Ovary (tissue), 10 donors: ENCODE measurements at regions of chr21 and their contacts with region 1.

Region 1: GRCh38 chr21:45478115-45478801 is 64.0 kb downstream of the SLC19A1 start:
- DNase-seq: peak in 3 of 5 donors; percentile 74 to 80 (median 75)
- H3K4me3 ChIP-seq: no peak overlapping the region
- H3K27ac ChIP-seq: peak overlapping the region in 1 of 2 donors; percentile 56
- H3K4me1 ChIP-seq: peaks cover 2% of the 10 kb centered on the region
- H3K27me3 ChIP-seq: no peaks in the 10 kb centered on the region
- CTCF ChIP-seq: peak; percentile 29 to 73 (median 63)
- EP300 ChIP-seq: no peak
- POLR2A ChIP-seq: no peak

Region 2: GRCh38 chr21:44984631-44985440 is 493.4 kb before region 1 on chr21:
- intact Hi-C with region 1: no loop called
- DNase-seq: peak in 3 of 5 donors; percentile 15 to 40 (median 21)
- H3K4me3 ChIP-seq: no peak overlapping the region
- H3K27ac ChIP-seq: no peak overlapping the region
- H3K4me1 ChIP-seq: peaks cover 12% of the 10 kb centered on the region
- H3K27me3 ChIP-seq: no peaks in the 10 kb centered on the region
- CTCF ChIP-seq: no peak
- EP300 ChIP-seq: no peak
- POLR2A ChIP-seq: no peak

Region 3: DNA sequence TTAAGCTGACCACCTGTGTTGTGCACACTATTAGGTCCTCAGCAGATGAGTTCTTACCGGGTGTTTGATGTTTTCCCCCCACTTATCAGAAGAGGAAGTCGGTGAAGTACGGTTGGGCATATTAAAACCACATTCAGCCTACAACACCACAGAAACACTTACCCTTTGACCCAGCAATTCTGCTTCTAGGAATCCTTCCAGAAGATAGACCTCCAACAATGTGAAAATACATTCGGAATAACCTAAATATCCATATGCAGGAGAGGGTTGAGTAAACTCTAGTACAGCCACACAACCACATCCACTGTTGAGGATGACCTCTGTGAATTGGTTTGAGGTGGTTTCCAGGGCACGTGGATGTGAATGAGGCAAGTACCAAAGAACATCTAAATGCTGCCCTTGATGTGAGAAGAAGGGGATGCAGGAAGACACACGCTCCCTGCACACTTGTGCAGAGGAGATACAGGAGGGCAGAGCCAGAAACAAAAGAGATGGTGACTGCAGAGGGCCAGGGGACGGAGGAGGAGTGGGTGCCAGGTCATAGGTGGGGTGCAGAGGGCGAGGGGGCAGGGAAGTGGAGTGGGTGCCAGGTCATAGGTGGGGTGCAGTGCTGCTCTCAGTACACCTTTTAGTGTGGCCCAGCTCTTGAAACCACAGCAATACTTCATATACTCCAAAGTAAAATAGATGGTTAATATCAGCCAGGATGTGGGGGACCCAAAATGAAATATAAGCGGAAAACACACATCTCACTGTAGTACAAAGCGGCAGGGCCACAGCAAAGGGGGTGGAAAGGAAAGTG is 391.0 kb before region 1 on chr21:
- intact Hi-C with region 1: no loop called
- DNase-seq: no peak
- H3K4me3 ChIP-seq: no peak overlapping the region
- H3K27ac ChIP-seq: no peak overlapping the region
- H3K4me1 ChIP-seq: no peaks in the 10 kb centered on the region
- H3K27me3 ChIP-seq: no peaks in the 10 kb centered on the region
- CTCF ChIP-seq: no peak
- EP300 ChIP-seq: no peak
- POLR2A ChIP-seq: no peak

Region 4: GRCh38 chr21:45386721-45387371 is 91.4 kb before region 1 on chr21:
- intact Hi-C with region 1: no loop called
- DNase-seq: peak; percentile 83 to 92 (median 88)
- H3K4me3 ChIP-seq: no peak overlapping the region
- H3K27ac ChIP-seq: peak overlapping the region; percentile 75 to 79
- H3K4me1 ChIP-seq: peaks cover 24% of the 10 kb centered on the region
- H3K27me3 ChIP-seq: no peaks in the 10 kb centered on the region
- CTCF ChIP-seq: peak; percentile 14 to 68 (median 61)
- EP300 ChIP-seq: peak; percentile 75
- POLR2A ChIP-seq: no peak

Region 5: GRCh38 chr21:45427331-45428271 is 50.7 kb before region 1 on chr21:
- intact Hi-C with region 1: no loop called
- DNase-seq: peak; percentile 77 to 90 (median 87)
- H3K4me3 ChIP-seq: no peak overlapping the region
- H3K27ac ChIP-seq: peak overlapping the region; percentile 37 to 44
- H3K4me1 ChIP-seq: peaks cover 30% of the 10 kb centered on the region
- H3K27me3 ChIP-seq: no peaks in the 10 kb centered on the region
- CTCF ChIP-seq: no peak
- EP300 ChIP-seq: no peak
- POLR2A ChIP-seq: no peak

Region 6: DNA sequence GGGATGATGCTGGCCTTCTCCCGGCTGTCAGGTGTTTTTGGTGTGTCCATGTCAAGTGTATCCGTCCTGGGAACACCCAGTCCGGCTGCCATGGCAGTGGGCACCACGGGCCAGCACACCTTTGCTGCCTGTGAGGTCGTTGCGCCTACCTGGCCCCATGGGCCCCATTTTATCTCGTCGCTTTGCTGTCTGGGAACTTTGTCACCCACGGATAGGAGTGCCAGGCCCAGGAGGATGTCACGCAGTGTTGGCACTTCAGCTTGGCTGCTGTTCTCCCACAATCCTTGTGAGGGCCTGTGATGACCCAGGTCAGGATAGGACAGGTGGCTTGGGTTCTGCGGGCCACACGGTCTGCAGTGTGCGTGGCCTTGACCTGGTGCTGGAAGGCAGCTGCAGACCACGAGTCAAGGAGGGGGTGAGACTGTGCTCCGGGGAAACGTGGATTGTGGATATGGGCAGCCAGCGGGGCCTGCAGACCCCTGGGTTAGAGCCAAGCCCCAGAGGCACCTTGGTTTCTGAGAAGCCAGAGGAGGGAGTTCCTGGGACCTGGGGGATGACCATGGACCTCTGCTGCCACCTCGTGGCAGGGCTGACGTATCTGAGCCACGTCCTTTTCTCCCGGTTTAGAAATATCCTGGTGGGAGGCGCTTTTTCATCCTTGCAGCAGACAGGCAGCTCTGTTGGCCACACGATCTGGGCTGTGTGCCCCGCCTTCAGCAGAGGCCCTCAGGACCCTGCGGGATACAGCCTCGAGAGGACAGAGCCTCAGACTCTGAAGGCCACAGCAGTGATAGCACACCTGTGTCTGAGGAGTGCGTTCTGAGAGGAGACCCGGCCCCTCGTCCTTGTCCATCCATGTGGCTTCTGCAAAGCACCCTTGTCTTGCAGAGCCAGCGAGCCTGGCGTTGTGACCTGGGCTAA is 342.2 kb after region 1 on chr21:
- intact Hi-C with region 1: loop called in 1 of 4 experiments (anchors 10 kb)
- DNase-seq: peak; percentile 68 to 88 (median 82)
- H3K4me3 ChIP-seq: no peak overlapping the region
- H3K27ac ChIP-seq: no peak overlapping the region
- H3K4me1 ChIP-seq: peaks cover 3% of the 10 kb centered on the region
- H3K27me3 ChIP-seq: no peaks in the 10 kb centered on the region
- CTCF ChIP-seq: peak; percentile 63 to 72 (median 66)
- EP300 ChIP-seq: no peak
- POLR2A ChIP-seq: no peak